K562 (cell line): ENCODE measurements at regions of chr7 and their contacts with region 1.

Region 1: GRCh38 chr7:26284995-26285632 is 6.5 kb upstream of the SNX10 start:
- DNase-seq: peak; percentile 31 to 81 (median 58)
- ATAC-seq: peak; percentile 99
- H3K4me3 ChIP-seq: no peak overlapping the region
- H3K27ac ChIP-seq: no peak overlapping the region
- H3K4me1 ChIP-seq: peaks cover 0 to 5% of the 10 kb centered on the region in 2 experiments; a peak in 2 of 5 replicates
- H3K27me3 ChIP-seq: no peaks in the 10 kb centered on the region; a peak in 1 of 5 replicates
- CTCF ChIP-seq: peak; percentile 68 to 88 (median 72)
- EP300 ChIP-seq: no peak
- POLR2A ChIP-seq: no peak
- RAD21 ChIP-seq: peak; percentile 94 to 95

Region 2: GRCh38 chr7:26046150-26046549 is 239.0 kb before region 1 on chr7:
- CTCF ChIA-PET with region 1: no interaction called
- POLR2A ChIA-PET with region 1: no interaction called
- in situ Hi-C with region 1: no loop called
- intact Hi-C with region 1: no loop called
- DNase-seq: no peak
- ATAC-seq: no peak
- H3K4me3 ChIP-seq: no peak overlapping the region
- H3K27ac ChIP-seq: no peak overlapping the region
- H3K4me1 ChIP-seq: no peaks in the 10 kb centered on the region
- H3K27me3 ChIP-seq: peaks cover 17% of the 10 kb centered on the region in 2 experiments; a peak in 4 of 5 replicates
- CTCF ChIP-seq: no peak
- EP300 ChIP-seq: no peak
- POLR2A ChIP-seq: no peak
- RAD21 ChIP-seq: no peak

Region 3: GRCh38 chr7:26078437-26079336 is 206.4 kb before region 1 on chr7:
- CTCF ChIA-PET with region 1: no interaction called
- POLR2A ChIA-PET with region 1: no interaction called
- in situ Hi-C with region 1: no loop called
- intact Hi-C with region 1: loop called (anchors 5 kb)
- DNase-seq: peak; percentile 16 to 69 (median 38)
- ATAC-seq: peak; percentile 93
- H3K4me3 ChIP-seq: no peak overlapping the region
- H3K27ac ChIP-seq: no peak overlapping the region
- H3K4me1 ChIP-seq: peaks cover 0 to 4% of the 10 kb centered on the region in 2 experiments; a peak in 3 of 5 replicates
- H3K27me3 ChIP-seq: peaks cover 9 to 22% of the 10 kb centered on the region in 2 experiments
- CTCF ChIP-seq: peak; percentile 62 to 69 (median 67)
- EP300 ChIP-seq: no peak
- POLR2A ChIP-seq: no peak
- RAD21 ChIP-seq: peak; percentile 71 to 78